HepG2 (cell line): ENCODE measurements at regions of chr5 and their contacts with region 1.

Region 1: GRCh38 chr5:56358703-56359681 is 125.9 kb upstream of the ANKRD55 start:
- DNase-seq: peak; percentile 100
- ATAC-seq: peak; percentile 99
- H3K4me3 ChIP-seq: peak overlapping the region; percentile 28 to 53 (median 35)
- H3K27ac ChIP-seq: peak overlapping the region; percentile 100
- H3K4me1 ChIP-seq: peaks cover 63% of the 10 kb centered on the region
- H3K27me3 ChIP-seq: no peaks in the 10 kb centered on the region
- CTCF ChIP-seq: peak; percentile 35; the same call in 1 of the 2 replicates
- EP300 ChIP-seq: peak; percentile 95 to 97; a peak in 3 of 4 replicates
- POLR2A ChIP-seq: peak; percentile 71 to 78
- RAD21 ChIP-seq: peak; percentile 68

Region 2: GRCh38 chr5:56328753-56329560 is 30.0 kb before region 1 on chr5:
- CTCF ChIA-PET with region 1: no interaction called
- POLR2A ChIA-PET with region 1: interaction called, 9 read pairs
- in situ Hi-C with region 1: no loop called
- intact Hi-C with region 1: loop called (anchors 2 kb)
- DNase-seq: peak; percentile 83
- ATAC-seq: peak; percentile 80
- H3K4me3 ChIP-seq: peak overlapping the region in 1 of 3 experiments; percentile 20; a peak in 2 of 6 replicates
- H3K27ac ChIP-seq: peak overlapping the region; percentile 46
- H3K4me1 ChIP-seq: peaks cover 73% of the 10 kb centered on the region
- H3K27me3 ChIP-seq: no peaks in the 10 kb centered on the region
- CTCF ChIP-seq: no peak
- EP300 ChIP-seq: peak in 1 of 2 experiments; percentile 59; a peak in 2 of 4 replicates
- POLR2A ChIP-seq: no peak
- RAD21 ChIP-seq: no peak

Region 3: DNA sequence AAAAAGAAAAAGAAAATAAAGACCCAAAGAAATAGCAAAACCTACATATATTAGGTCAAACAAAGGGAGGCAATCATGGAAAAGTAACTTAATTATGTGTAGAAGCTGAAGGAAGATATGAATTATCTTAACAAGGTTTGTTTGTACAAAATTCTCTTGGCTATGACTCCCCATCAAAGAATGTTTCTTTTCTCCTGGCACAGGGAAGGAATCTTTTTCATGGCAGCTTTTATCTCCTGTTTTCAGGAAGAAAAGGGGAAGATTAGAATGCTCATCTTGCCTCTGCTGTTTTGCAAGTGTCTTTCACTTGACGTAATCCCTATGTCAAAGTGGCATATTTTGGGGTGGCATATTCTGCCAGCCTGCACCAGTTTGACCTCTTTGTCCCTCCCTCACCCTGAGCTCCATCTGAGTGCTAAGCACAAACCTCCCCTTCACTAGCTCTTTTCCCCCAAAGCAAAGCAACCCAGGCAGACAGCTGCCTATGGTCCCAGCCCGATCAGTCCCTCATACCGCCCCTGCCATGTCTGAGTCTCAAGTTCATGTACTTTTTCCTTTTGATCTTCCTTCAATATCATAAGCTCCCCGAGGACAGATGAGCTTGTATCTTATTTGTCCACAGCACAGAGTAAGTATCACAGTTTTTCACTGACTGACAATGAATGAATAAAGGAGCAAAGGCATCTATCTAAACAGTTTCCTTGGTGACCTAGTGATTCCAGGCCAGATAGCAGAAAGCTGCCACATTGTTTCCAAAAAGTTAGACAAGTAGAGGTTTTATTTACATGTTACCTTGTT is 116.9 kb after region 1 on chr5:
- CTCF ChIA-PET with region 1: no interaction called
- POLR2A ChIA-PET with region 1: interaction called, 18 read pairs
- in situ Hi-C with region 1: loop called (anchors 10 kb)
- intact Hi-C with region 1: loop called (anchors 1 kb)
- DNase-seq: peak; percentile 79
- ATAC-seq: peak; percentile 11
- H3K4me3 ChIP-seq: peak overlapping the region in 2 of 3 experiments; percentile 9 to 15; a peak in 1 of 6 replicates
- H3K27ac ChIP-seq: peak overlapping the region; percentile 54
- H3K4me1 ChIP-seq: peaks cover 67% of the 10 kb centered on the region
- H3K27me3 ChIP-seq: no peaks in the 10 kb centered on the region
- CTCF ChIP-seq: no peak
- EP300 ChIP-seq: no peak
- POLR2A ChIP-seq: no peak
- RAD21 ChIP-seq: no peak

Region 4: GRCh38 chr5:56676091-56676768 is 317.2 kb after region 1 on chr5:
- CTCF ChIA-PET with region 1: no interaction called
- POLR2A ChIA-PET with region 1: no interaction called
- in situ Hi-C with region 1: no loop called
- intact Hi-C with region 1: loop called (anchors 5 kb)
- DNase-seq: peak; percentile 92
- ATAC-seq: peak; percentile 99
- H3K4me3 ChIP-seq: no peak overlapping the region
- H3K27ac ChIP-seq: peak overlapping the region; percentile 22
- H3K4me1 ChIP-seq: peaks cover 53% of the 10 kb centered on the region
- H3K27me3 ChIP-seq: no peaks in the 10 kb centered on the region
- CTCF ChIP-seq: no peak
- EP300 ChIP-seq: peak in 1 of 2 experiments; percentile 60; a peak in 2 of 4 replicates
- POLR2A ChIP-seq: no peak
- RAD21 ChIP-seq: no peak

Region 5: GRCh38 chr5:56838409-56839039 is 479.5 kb after region 1 on chr5:
- CTCF ChIA-PET with region 1: no interaction called
- POLR2A ChIA-PET with region 1: interaction called, 4 read pairs
- in situ Hi-C with region 1: no loop called
- intact Hi-C with region 1: loop called (anchors 1 kb)
- DNase-seq: peak; percentile 33
- ATAC-seq: no peak
- H3K4me3 ChIP-seq: no peak overlapping the region
- H3K27ac ChIP-seq: no peak overlapping the region
- H3K4me1 ChIP-seq: peaks cover 53% of the 10 kb centered on the region
- H3K27me3 ChIP-seq: no peaks in the 10 kb centered on the region
- CTCF ChIP-seq: peak; percentile 66
- EP300 ChIP-seq: no peak
- POLR2A ChIP-seq: no peak
- RAD21 ChIP-seq: peak; percentile 56